ENCODE measurements at regions of chr6 and their contacts with region 1.

Region 1: DNA sequence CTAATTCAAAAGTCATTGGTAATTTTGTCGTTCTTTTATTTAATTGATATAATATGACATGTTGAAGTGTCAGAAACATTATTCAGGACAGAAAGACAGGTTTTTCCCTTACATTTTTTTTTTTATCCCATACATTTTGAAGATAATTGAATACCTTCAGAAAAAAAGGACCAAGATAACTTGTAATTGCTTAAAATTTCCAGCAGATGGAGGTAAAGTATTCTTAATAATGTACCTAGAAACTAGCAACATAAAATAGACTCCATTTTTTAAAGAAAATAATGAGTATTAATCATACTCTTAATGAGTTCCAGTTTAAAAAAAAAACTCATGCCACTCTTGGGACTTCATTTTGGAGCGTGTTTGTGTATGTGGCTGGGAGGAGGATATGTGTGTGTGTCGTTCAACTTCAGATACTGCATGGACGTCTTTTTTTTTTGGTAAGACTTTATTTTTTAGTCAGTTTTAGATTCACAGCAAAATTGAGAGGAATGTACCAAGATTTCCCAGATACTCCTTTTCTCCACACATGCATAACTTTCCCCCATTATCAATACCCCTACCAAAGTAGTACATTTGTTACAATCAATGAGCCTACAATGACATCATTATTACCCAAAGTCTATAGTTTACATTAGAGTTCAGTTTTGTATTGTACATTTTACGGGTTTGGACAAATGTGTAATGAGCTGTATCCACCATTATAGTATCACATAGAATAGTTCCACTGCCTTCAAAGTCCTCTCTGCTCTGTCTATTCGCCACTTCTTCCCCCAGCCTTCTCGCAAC is 79.4 kb downstream of the ROS1 start:
- DNase-seq: no peak
- ATAC-seq: peak in 1 of 2 donors; percentile 23

Region 2: DNA sequence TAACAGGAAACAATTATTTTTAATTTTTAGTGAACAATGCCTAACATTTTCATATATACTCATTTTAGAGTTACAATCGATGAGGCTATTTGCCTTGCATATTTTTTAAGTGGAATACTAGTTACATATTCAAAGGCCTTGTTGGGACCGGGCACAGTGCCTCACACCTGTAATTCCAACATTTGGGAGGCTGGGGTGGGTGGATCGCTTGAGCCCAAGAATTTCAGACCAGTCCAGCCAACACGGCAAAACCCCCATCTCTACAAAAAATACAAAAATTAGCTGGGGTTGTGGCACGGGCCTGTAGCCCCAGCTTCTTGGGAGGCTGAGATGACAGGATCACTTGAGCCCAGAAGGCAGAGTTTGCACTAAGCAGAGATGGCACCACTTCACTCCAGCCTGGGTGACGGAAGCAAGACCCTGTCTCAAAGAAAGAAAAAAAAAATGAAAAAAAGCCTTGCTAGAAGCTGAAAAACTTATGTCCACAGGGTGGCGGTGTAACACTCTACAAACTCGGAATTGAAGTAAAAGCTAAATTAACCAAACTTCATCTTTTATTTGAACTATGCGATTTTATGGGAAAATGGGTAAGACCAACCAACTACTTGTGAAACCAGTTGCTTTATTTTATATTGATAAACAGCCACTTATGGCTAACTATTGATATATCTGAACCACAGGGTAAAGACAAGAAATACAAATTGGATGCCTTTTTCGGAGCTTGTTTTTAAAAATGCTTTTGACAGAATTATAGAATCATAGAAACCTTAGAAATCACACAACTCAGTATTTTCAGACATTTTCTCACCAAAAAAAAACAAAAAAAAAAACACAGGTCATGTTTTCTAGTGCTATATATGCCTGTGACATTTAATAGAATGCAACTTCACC is 103.5 kb after region 1 on chr6:
- intact Hi-C with region 1: loop called (anchors 5 to 10 kb)
- DNase-seq: peak; percentile 29
- ATAC-seq: peak; percentile 41 to 49

Region 3: DNA sequence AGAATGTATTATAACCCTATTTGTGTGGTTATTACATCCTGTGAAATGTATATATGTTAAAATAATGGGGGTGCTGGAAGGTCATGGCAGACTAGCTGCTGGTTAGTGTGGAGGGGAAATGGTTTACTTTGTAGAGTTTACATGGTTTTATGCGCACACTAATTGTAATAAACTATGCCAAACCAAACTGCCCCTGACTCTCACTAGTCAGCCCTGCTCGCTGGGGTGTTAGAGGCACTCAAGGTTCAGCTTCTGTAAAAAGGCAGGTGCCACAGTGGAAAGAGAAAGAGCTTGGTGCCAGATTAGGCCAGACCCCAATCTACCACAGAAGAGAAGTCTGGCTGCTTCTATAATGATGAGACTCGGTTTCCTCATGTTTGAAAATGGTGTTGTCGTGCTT is 203.3 kb after region 1 on chr6:
- intact Hi-C with region 1: loop called in 1 of 2 experiments (anchors 5 kb)
- DNase-seq: no peak
- ATAC-seq: no peak

Region 4: DNA sequence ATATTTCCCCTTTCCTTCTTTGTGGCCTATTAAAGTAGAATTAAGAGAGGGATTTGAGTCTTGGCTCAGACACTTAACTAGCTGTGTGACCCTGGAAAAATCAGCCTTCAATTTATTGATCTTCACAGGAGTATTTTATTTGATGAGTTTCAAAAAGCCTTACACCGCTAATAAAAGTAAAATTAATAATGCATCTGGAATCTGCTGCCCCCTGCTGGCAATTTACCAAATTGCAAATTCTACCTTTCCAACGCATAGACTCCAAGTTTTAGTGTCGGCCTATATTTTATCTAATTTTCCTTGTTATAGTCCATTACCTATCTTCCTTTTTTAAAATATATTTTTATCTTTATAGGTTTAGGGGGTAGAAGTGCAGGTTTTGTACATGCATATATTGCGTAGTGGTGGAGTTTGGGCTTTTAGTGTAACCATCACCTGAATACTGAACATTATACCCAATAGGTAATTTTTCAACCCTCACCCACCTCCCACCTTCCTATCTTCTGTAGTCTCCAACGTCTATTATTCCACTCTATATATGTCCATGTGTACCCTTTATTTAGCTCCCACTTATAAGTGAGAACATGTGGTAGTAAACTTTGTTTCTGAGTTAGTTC is 209.7 kb after region 1 on chr6:
- intact Hi-C with region 1: loop called (anchors 5 kb)
- DNase-seq: peak; percentile 31
- ATAC-seq: no peak

Region 5: DNA sequence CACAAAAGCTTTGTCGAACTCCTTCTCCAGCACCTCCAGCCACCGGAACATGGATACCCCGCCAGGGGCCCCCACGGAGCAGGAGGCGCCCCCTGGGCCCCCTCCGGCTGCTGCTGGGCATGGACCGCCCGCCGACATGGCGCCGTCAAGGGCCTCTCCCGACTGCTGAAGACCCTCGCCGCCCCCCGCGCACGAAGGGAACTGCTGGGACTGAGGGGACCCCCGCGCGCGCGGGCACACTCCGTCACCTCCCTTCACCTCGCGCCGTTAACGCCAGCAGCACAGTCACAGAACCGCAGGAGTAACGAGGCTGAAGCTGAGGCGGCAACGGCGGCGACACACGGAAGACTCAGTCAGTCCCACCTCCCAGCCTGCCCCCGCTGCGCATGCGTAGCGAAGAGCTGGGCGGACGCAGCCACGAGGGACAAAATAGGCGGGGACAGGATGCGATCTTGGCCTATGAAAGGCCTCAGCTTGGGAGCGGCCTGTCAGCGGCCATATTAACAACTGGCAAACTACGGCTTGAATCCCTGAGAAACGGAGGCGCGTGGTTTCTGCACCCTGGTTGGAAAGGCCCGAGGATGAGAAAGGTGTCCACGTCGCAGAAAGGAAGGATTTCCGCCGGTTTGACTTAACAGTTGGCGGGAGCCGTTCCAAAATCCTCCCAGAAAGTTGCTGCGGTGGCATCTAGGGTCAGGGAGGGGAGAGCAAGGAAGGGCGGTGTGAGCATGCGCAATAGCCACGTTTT is 256.0 kb after region 1 on chr6 and contains the start of gene GOPC:
- intact Hi-C with region 1: loop called (anchors 2 to 10 kb)
- DNase-seq: peak; percentile 97
- ATAC-seq: peak; percentile 99 to 100
- total RNA-seq, gene GOPC: 18.3 to 20.6 TPM

Region 6: DNA sequence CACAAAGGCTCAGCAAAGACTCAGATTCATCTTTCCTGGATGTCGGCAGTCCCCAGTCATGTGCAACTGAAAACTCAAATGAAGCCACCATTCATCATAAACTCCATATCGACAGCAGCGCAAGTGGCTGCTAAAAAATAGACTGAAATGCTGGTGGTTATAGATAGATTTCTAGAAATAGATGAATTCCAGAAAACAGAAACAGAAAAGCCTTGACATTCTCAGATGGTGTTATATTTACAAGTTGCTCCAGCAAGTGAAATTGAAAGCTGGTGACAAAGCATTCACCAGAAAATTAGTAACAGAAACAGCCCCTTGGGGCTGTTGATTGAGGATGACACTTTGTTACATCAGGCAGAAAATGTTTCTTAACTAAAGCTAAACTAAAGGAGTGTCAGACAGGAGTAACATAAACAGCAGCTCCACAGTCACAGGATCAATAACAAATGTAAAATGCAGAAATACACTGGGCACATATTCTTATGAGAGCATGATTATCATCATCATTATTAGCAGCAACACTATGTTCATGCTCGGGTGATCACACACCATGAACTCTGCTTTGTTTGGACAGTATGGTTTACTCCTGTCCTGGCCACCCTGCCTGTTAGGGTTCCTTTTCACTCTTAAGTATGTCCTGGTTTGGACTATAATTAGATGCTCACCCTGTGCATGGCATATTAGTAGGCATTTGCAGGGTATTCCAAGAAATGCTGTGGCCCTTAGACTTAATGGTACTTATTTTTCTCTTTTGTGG is 524.3 kb after region 1 on chr6:
- intact Hi-C with region 1: no loop called
- DNase-seq: no peak
- ATAC-seq: no peak